ENCODE measurements at regions of chr12 and their contacts with region 1.

Region 1: GRCh38 chr12:46661110-46661845 is 164.5 kb downstream of the SLC38A4 start:
- DNase-seq: no peak
- H3K4me3 ChIP-seq: peak overlapping the region in 1 of 4 donors; percentile 14
- H3K27ac ChIP-seq: peak overlapping the region; percentile 58 to 78 (median 70)
- H3K4me1 ChIP-seq: peaks cover 38 to 41% (median 39%) of the 10 kb centered on the region in 4 donors
- H3K27me3 ChIP-seq: no peaks in the 10 kb centered on the region
- CTCF ChIP-seq: peak; percentile 76 to 88 (median 77)
- EP300 ChIP-seq: no peak
- POLR2A ChIP-seq: no peak

Region 2: GRCh38 chr12:46124848-46125619 is 536.2 kb before region 1 on chr12:
- intact Hi-C with region 1: loop called (anchors 5 kb)
- DNase-seq: no peak
- H3K4me3 ChIP-seq: peak overlapping the region; percentile 30 to 51 (median 42)
- H3K27ac ChIP-seq: peak overlapping the region in 3 of 4 donors; percentile 25 to 42 (median 37)
- H3K4me1 ChIP-seq: peaks cover 12 to 21% (median 15%) of the 10 kb centered on the region in 4 donors
- H3K27me3 ChIP-seq: no peaks in the 10 kb centered on the region
- CTCF ChIP-seq: peak; percentile 72 to 80 (median 72)
- EP300 ChIP-seq: no peak
- POLR2A ChIP-seq: no peak

Region 3: GRCh38 chr12:46144433-46144832 is 516.8 kb before region 1 on chr12:
- intact Hi-C with region 1: loop called (anchors 5 kb)
- DNase-seq: no peak
- H3K4me3 ChIP-seq: no peak overlapping the region
- H3K27ac ChIP-seq: no peak overlapping the region
- H3K4me1 ChIP-seq: no peaks in the 10 kb centered on the region
- H3K27me3 ChIP-seq: no peaks in the 10 kb centered on the region
- CTCF ChIP-seq: no peak
- EP300 ChIP-seq: no peak
- POLR2A ChIP-seq: no peak

Region 4: DNA sequence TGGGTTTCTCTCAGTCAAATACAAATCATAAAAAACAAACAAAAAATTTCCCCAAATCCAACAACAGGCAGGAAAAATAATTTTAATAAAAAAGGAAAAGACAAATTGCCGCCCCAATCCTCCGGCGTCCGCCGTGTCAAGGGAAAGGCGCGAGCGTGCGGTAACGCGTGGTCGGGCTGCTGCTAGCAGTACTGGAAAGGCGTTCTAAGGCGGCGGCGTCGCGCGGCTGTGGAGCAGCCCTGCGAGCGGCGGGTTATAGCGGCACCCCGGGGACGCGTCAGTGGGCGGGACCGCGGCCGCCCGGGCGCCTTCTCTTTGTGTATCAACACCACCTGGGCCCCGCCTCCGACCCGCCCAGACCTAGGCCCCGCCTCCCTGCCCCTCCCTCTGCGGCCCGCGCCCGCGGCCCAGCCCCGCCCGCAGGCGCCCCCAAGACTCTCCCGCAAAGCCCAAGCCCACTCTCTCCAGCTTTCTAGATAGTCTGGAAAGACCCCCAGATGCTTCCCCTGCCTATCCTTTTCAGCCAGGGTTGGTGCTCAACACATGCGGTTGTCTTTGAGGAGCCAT is 288.7 kb before region 1 on chr12 and contains the start of gene SLC38A2:
- intact Hi-C with region 1: loop called (anchors 2 kb)
- DNase-seq: peak; percentile 99
- H3K4me3 ChIP-seq: peak within 1 kb of the TSS; percentile 80 to 96 (median 88)
- H3K27ac ChIP-seq: peak within 1 kb of the TSS; percentile 95 to 99 (median 97)
- H3K4me1 ChIP-seq: peaks cover 33 to 41% (median 41%) of the 10 kb centered on the region in 4 donors
- H3K27me3 ChIP-seq: no peaks in the 10 kb centered on the region
- CTCF ChIP-seq: no peak
- EP300 ChIP-seq: no peak
- POLR2A ChIP-seq: peak; percentile 99
- total RNA-seq, gene SLC38A2: 177 to 241 (median 225) TPM

Region 5: GRCh38 chr12:46629331-46630229 is 31.7 kb before region 1 on chr12:
- intact Hi-C with region 1: no loop called
- DNase-seq: no peak
- H3K4me3 ChIP-seq: no peak overlapping the region
- H3K27ac ChIP-seq: no peak overlapping the region
- H3K4me1 ChIP-seq: peaks cover 0 to 15% (median 4%) of the 10 kb centered on the region in 4 donors
- H3K27me3 ChIP-seq: no peaks in the 10 kb centered on the region
- CTCF ChIP-seq: no peak
- EP300 ChIP-seq: no peak
- POLR2A ChIP-seq: no peak